Activated CD4-positive, alpha-beta memory T cell treated with anti-CD3 and anti-CD28 coated beads for 36 hours (primary cell): ENCODE measurements at regions of chr6 and their contacts with region 1.

Region 1: DNA sequence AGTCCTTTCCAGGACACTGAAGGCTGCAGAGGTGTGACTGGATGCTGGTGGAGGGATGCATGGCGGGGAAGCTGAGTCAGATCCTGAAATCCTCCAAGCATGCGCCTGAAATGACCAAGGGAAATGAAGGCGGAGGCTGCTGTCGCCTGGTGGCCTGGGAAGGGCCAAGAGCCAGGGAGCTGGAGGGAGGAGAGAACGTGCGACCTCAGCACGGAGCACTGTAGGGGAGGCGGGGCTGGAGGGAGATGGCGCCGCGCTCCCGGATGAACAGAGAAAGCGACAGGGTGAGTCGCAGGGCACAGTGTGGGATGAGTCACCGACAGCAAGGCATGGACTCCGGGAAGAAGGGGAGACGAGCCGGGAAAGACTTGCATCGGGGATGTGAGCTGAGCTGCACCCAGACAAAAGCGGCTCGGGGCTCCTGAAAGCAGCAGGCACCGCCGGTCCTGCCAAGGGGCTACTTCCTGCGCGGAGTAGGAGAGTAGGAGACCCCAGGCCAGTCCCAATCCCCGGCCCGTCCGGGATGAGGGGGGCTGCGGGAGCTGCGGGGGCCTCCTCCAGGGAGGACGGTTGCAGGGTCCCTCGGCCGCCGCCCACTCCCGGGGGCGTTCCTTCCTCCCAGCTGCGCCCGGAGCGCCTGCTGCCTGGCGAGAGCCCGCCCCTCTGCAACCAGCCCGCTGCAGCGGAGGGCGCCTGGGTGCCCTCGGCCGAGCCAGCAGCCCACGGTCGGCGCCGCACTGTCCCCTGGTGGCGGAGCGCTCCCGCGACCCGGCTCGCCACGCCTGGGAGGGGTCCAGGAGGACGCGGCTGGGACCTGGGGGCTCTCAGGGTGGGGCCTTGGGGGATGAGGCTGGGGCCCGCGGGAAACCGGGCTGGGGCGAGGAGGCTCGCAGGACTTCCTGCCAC is 11.0 kb upstream of the NQO2 start:
- DNase-seq: peak; percentile 87
- H3K4me3 Mint-ChIP-seq: peak overlapping the region; percentile 84
- H3K27ac Mint-ChIP-seq: peak overlapping the region; percentile 98
- H3K4me1 Mint-ChIP-seq: peaks cover 20% of the 10 kb centered on the region
- H3K27me3 Mint-ChIP-seq: no peaks in the 10 kb centered on the region

Region 2: DNA sequence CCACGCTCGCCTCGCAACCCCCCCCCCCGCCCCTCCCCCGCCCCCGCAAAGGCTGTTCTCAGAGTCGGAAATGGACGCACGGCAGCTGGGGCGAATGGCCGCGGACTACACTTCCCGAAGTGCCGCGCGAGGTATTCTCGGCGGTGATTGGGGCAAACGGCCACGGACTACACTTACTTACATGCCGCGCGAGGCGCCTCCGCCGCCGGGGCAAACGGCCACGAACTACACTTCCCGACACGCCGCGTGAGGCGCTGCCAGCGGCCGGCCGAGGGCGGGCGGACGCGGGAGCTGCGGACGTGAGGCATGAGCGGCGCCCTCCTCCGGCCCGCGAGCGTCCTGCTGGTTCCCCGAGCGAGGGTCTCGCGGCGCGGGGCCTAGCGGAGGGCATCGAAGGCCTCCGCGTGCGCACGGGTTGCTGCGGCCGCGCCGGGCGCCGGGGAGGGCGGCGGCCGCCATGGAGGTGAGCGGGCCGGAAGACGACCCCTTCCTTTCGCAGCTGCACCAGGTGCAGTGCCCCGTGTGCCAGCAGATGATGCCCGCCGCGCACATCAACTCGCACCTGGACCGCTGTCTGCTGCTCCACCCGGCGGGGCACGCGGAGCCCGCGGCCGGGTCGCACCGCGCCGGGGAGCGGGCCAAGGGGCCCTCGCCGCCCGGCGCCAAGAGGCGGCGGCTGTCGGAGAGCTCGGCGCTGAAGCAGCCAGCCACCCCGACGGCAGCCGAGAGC is 223.3 kb before region 1 on chr6 and contains the start of gene WRNIP1:
- CTCF ChIA-PET with region 1: interaction called, 8 read pairs
- POLR2A ChIA-PET with region 1: no interaction called
- intact Hi-C with region 1: loop called (anchors 1 kb)
- DNase-seq: peak; percentile 98
- H3K4me3 Mint-ChIP-seq: peak within 1 kb of the TSS; percentile 92
- H3K27ac Mint-ChIP-seq: peak within 1 kb of the TSS; percentile 97
- H3K4me1 Mint-ChIP-seq: peaks cover 45% of the 10 kb centered on the region
- H3K27me3 Mint-ChIP-seq: no peaks in the 10 kb centered on the region
- total RNA-seq, gene WRNIP1: 32.7 to 32.8 TPM

Region 3: DNA sequence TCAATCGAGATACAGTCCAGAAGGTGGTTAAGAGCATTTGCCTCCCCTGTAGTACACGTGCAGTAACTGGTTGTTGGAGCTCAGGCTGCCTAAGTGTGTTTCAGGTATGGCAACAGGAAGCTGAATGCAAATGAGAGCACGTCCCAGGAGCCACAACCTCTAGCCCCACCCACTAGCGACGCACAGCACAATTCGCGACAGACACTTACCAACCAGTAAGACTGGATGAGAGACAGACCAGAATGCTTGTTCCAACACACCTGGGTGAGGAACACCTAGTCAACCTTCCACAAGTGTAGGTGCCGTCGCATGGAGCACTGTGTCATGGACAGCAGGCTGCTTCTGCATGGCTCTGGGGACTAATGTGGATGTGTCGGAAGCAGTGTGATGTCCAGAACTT is 139.8 kb before region 1 on chr6:
- CTCF ChIA-PET with region 1: interaction called, 84 read pairs
- POLR2A ChIA-PET with region 1: interaction called, 23 read pairs
- intact Hi-C with region 1: loop called (anchors 1 kb)
- DNase-seq: peak; percentile 85
- H3K4me3 Mint-ChIP-seq: peak overlapping the region; percentile 59
- H3K27ac Mint-ChIP-seq: peak overlapping the region; percentile 81
- H3K4me1 Mint-ChIP-seq: peaks cover 53% of the 10 kb centered on the region
- H3K27me3 Mint-ChIP-seq: no peaks in the 10 kb centered on the region

Region 4: GRCh38 chr6:2931970-2932748 is 56.5 kb before region 1 on chr6:
- CTCF ChIA-PET with region 1: interaction called, 40 read pairs
- POLR2A ChIA-PET with region 1: interaction called, 15 read pairs
- intact Hi-C with region 1: no loop called
- DNase-seq: peak; percentile 93
- H3K4me3 Mint-ChIP-seq: peak overlapping the region; percentile 28
- H3K27ac Mint-ChIP-seq: peak overlapping the region; percentile 77
- H3K4me1 Mint-ChIP-seq: peaks cover 26% of the 10 kb centered on the region
- H3K27me3 Mint-ChIP-seq: no peaks in the 10 kb centered on the region

Region 5: DNA sequence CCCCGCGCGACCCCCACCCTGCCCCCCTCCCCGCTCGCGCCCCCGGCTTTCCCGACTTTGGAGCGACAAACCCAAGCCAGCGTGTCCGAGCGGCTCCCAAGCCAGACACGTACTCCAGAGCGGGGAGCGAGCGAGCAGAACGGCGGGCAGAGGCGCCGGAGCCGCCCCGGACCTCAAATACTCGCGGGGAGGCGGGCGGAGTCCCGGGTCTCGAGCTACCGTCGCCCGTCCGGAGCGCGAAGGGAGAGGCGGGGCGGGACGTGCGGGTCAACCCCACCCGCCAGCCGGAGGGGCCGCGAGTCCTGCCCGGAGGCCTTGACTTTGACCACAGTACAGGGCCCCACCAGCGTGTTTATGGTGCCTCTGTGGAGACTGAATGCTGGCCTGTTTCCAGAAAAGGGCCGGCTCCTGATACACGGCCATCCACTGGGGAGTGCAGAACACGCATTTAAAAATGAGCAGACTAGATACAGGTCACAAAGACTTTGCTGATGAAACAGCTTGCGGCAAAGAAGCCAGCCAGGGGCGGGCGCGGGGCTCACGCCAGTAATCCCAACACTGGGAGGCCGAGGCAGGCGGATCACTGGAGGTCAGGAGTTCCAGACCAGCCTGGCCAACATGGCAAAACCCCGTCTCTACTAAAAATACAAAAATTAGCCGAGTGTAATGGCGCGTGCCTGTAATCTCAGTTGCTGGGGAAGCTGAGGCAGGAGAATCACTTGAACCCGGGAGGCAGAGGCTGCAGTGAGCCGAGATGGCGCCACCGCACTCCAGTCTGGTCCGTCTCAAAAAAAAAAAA is 17.1 kb before region 1 on chr6 and contains the start of gene SERPINB6:
- CTCF ChIA-PET with region 1: interaction called, 28 read pairs
- POLR2A ChIA-PET with region 1: interaction called, 11 read pairs
- intact Hi-C with region 1: loop called (anchors 2 kb)
- DNase-seq: peak; percentile 51
- H3K4me3 Mint-ChIP-seq: peak within 1 kb of the TSS; percentile 80
- H3K27ac Mint-ChIP-seq: peak within 1 kb of the TSS; percentile 87
- H3K4me1 Mint-ChIP-seq: peaks cover 38% of the 10 kb centered on the region
- H3K27me3 Mint-ChIP-seq: peaks cover 5% of the 10 kb centered on the region
- total RNA-seq, gene SERPINB6: 59.0 to 64.7 TPM

Region 6: GRCh38 chr6:3023663-3024483 is 35.2 kb after region 1 on chr6:
- CTCF ChIA-PET with region 1: interaction called, 4 read pairs
- POLR2A ChIA-PET with region 1: interaction called, 9 read pairs
- intact Hi-C with region 1: loop called (anchors 5 kb)
- DNase-seq: peak; percentile 95
- H3K4me3 Mint-ChIP-seq: peak overlapping the region; percentile 96
- H3K27ac Mint-ChIP-seq: peak overlapping the region; percentile 98
- H3K4me1 Mint-ChIP-seq: peaks cover 66% of the 10 kb centered on the region
- H3K27me3 Mint-ChIP-seq: no peaks in the 10 kb centered on the region

Region 7: DNA sequence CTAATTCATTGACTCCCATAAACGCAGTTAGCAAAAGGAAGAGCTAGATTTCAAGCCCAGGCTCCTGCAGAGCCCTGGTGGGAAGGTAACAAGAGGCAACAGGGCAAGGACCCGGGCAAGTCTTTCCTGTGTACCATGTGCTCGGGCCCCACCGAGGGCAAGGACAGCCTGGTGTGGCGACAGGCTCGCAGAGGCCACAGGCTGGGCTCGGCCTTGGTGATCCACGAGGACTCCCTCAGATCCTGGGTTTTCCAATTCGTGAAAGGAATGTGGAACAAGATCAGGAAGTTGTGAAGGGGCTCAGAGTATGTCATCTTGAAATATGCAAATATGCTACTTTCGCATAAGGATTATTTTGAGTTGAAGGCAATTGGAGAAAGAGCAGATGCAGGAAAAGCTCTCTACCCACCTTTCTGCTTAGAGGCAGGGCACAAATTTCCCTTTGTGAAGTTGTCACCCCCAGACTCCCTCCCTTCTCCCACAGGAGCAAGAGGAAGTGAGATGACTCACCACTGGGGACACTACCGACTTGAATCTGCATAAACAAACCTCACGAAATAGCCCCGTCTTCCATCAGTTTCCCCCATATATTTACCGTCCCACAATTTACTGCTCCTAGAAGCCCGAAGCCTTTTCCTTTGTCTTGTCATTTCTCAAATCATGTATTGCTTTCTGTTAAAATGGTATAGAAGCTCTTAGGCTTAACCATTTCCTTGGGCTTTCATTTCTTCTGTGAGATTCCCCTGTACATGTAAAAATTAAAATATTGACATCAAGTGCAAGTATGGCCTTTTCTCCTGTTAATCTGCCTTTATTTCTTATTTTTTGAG is 349.1 kb after region 1 on chr6:
- CTCF ChIA-PET with region 1: no interaction called
- POLR2A ChIA-PET with region 1: no interaction called
- intact Hi-C with region 1: no loop called
- DNase-seq: no peak
- H3K4me3 Mint-ChIP-seq: no peak overlapping the region
- H3K27ac Mint-ChIP-seq: no peak overlapping the region
- H3K4me1 Mint-ChIP-seq: peaks cover 17% of the 10 kb centered on the region
- H3K27me3 Mint-ChIP-seq: no peaks in the 10 kb centered on the region